Activated CD4-positive, alpha-beta memory T cell treated with anti-CD3 and anti-CD28 coated beads, Interleukin-2, amount 10 ng/mL, durations not matched to agents 7 days and 5 days (primary cell): ENCODE measurements at regions of chr11 and their contacts with region 1.

Region 1: GRCh38 chr11:33039274-33040032 is at the start of gene TCP11L1:
- DNase-seq: peak; percentile 83
- H3K4me3 Mint-ChIP-seq: peak within 1 kb of the TSS; percentile 89
- H3K27ac Mint-ChIP-seq: peak within 1 kb of the TSS; percentile 89
- H3K4me1 Mint-ChIP-seq: peaks cover 31% of the 10 kb centered on the region
- H3K27me3 Mint-ChIP-seq: peaks cover 9% of the 10 kb centered on the region
- total RNA-seq, gene TCP11L1: 17.6 to 19.0 TPM

Region 2: GRCh38 chr11:32893343-32894148 is 145.9 kb before region 1 on chr11:
- CTCF ChIA-PET with region 1: interaction called, 6 read pairs
- POLR2A ChIA-PET with region 1: interaction called, 24 read pairs
- DNase-seq: peak; percentile 46
- H3K4me3 Mint-ChIP-seq: peak overlapping the region; percentile 96
- H3K27ac Mint-ChIP-seq: peak overlapping the region; percentile 78
- H3K4me1 Mint-ChIP-seq: peaks cover 36% of the 10 kb centered on the region
- H3K27me3 Mint-ChIP-seq: peaks cover 11% of the 10 kb centered on the region

Region 3: DNA sequence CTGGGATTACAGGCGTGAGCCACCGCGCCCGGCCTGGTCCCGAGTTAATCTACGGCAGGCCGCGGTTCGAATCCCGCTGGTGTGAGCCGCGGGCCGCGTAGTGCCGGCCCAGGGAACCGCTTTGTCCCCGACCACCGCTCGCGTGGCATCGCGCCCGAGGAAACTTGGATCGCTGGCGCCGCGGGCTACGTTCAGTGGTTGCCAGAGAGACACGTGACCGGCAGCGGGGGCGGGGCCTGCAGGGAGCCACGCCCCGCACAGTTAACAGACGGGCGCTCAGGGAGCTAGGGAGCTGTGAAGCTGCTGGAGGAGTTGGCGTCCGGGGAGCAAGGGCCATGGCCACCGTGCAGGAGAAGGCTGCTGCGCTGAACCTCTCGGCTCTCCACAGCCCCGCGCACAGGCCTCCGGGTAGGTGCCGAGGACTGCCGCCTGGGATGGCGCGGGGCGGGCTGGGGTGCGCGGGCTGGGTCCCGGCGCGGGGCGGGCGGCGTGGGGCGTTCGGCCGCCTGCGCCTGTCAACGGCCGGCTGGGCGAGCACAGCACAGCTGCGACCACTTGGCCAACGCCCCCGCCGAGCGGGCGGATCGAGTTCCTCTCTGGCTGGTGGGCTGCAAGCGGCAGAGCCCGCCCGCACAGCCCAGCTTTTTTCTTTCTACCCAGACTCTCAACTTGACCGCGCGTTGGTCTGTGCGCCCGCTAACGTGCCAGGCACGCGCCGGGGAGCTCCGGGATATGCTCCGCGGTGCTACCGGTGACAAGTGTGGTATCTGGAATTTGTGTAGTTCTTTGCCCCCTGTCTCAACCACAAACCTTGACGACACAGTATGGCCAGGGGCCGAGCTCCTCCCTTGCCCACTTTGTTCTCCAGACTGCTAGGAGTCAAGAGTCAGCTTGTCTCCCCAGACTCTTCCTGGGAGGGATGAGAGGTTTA is 23.6 kb before region 1 on chr11 and contains the start of gene DEPDC7:
- CTCF ChIA-PET with region 1: interaction called, 7 read pairs
- POLR2A ChIA-PET with region 1: interaction called, 21 read pairs
- DNase-seq: peak; percentile 77
- H3K4me3 Mint-ChIP-seq: peak within 1 kb of the TSS; percentile 75
- H3K27ac Mint-ChIP-seq: no peak within 1 kb of the TSS
- H3K4me1 Mint-ChIP-seq: peaks cover 25% of the 10 kb centered on the region
- H3K27me3 Mint-ChIP-seq: peaks cover 61% of the 10 kb centered on the region
- total RNA-seq, gene DEPDC7: 1.1 TPM

Region 4: GRCh38 chr11:33021937-33022336 is 17.5 kb before region 1 on chr11:
- CTCF ChIA-PET with region 1: interaction called, 4 read pairs
- POLR2A ChIA-PET with region 1: interaction called, 20 read pairs
- DNase-seq: no peak
- H3K4me3 Mint-ChIP-seq: no peak overlapping the region
- H3K27ac Mint-ChIP-seq: no peak overlapping the region
- H3K4me1 Mint-ChIP-seq: no peaks in the 10 kb centered on the region
- H3K27me3 Mint-ChIP-seq: peaks cover 61% of the 10 kb centered on the region

Region 5: DNA sequence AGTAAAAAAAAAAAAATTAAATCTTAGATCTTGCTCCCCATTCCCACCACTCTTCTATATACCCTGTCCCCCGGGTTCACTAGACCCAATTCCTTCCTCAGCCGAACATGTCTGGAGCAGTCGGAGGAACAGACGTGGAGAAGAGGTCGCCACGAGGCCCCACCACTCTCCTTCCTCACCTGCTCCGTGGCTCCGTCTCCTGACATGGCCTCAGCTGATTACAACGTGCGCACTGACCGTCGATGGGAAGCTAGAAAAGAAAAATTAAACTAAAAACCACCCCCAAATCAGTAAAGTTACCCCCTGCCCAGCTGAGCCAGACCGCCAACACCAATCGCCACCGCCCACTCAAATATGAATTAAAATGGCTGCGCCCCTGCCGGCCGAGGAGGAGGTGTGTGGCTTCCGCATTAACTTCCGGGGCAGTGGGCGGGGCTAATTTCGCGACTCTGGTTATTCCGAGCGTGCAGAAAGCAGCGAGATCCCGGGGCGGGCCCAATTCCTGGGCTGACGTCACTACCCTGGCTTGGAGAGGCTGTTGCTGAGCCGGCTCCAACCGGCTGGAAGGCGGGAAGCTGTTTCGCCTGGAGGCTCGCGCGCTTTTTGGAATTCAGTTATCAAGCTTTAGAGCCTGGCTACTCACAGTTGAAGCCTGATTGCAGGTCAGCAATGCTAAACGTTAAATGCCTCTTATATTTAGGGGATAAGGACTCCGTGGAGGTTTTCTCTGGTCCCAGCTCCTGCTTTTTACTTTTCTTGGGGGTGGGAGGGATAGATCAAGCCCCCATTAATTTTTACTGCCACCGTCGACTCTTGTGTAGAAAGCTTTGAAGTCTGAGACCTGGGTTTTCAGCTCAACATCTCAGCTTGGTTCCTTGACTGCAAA is 121.9 kb after region 1 on chr11 and contains the start of gene CSTF3:
- CTCF ChIA-PET with region 1: interaction called, 3 read pairs
- POLR2A ChIA-PET with region 1: interaction called, 12 read pairs
- DNase-seq: peak; percentile 96
- H3K4me3 Mint-ChIP-seq: peak within 1 kb of the TSS; percentile 99
- H3K27ac Mint-ChIP-seq: peak within 1 kb of the TSS; percentile 89
- H3K4me1 Mint-ChIP-seq: peaks cover 41% of the 10 kb centered on the region
- H3K27me3 Mint-ChIP-seq: no peaks in the 10 kb centered on the region
- total RNA-seq, gene CSTF3: 26.5 to 30.2 TPM